Posterior vena cava (tissue), 2 donors: ENCODE measurements at regions of chr7 and their contacts with region 1.

Region 1: DNA sequence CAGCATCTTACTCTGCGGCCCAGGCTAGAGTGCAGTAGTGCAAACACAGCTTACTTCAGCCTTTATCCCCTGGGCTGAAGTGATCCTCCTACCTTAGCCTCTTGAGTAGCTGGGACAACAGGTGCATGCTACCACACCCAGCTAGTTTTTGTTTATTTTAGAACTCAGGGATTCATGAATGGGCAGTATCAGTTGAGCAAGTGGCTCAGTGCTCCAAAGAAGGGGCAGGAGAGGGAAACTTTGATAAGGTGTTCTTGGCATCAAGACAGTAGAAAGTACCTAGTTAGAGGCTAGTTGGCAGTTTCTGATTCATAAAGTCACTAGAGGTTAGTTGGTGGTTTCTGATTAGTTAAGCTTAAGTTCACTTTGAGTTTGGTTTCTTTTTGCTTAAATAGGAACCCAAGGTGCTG is 18.4 kb downstream of the TRIM24 start:
- DNase-seq: no peak

Region 2: GRCh38 chr7:137820677-137821420 is 657.7 kb before region 1 on chr7:
- intact Hi-C with region 1: loop called in 1 of 2 experiments (anchors 10 kb)
- DNase-seq: peak; percentile 92

Region 3: DNA sequence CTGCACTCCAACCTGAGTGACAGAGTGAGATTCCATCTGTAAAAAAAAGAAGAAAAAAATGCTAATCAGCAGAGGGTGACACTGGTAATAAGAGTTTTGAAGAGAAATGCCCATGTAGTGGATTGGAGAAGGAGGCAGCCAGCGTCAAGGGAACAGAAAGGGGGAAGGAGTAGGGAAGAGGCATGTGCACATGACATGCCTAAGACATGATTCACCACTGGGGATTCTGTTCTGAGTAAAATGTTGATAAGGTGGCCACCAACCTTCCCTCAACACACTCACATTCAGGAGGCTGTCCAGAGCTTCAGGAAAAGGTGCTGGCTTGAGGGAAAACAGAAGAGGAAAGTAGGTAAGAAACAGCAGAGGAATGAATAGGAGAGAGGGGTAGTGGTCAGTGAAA is 362.4 kb before region 1 on chr7:
- intact Hi-C with region 1: no loop called
- DNase-seq: no peak

Region 4: DNA sequence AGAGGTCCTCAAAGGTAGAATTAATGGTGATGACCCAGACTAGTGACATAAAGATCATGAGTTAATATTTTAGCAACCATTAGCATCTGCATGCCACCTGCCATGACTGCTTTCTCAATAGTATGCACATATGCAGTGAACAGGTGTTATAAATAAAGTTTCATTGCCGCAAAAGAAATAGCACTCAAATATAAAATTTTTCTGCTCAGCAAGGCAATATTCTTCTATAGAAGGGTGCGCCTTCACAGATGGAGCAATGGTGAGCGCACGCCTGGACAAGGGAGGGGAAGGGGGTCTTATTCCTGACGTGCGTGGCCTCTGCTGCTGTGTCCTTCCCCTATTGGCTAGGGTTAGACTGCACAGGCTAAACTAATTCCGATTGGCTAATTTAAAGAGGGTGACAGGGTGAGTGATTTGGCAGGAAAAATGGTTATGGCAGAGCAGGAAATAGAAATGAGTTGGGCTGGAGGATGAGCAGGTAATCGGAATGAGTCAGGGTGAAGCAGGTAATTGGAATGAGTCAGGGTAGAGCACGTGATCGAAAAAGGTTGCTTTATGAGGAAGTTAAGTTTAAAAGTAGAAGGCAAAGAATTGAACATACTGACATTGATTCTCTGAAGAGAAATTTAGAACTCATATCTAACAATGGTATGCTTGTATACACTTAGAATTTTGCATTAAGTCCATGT is 43.1 kb before region 1 on chr7:
- intact Hi-C with region 1: no loop called
- DNase-seq: no peak